Heart left ventricle (tissue), 16 donors: ENCODE measurements at regions of chr20 and their contacts with region 1.

Region 1: DNA sequence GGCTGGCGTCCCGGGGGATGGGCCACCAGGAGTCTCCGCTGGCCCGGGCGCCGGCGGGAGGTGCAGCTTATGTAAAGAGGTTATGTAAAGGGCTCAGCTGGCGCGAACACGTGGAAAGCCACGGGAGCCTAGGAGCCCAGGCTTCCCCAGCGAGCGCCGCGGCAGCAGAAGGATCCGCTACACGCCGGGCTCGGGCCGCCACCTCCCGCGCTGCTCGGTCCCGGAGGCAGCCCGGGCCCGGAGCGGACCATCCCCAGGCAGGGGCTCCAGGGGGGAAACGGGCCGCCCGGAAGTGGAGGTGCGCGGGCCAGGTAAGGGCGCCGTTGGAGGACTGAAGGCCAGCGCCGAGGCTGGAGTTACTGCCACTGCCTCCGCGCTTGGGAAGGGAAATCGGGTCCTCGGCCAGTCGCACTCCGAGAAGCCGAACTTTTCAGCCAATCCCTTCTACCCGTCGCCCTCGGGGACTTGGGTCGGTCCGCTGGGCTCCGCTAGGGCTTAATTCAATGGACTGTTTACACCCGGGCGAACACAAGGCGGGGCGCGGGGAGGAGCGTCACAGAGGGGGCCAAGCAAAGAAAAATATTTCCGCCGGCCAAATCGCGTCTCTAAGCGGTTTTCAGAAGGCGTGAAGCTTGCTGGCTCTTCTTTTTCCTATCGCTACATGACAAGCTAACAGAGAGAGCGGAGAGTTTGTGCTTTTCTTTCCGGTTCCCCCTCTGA is 398 bp downstream of the STK35 start:
- DNase-seq: peak; percentile 93 to 96 (median 94)
- ATAC-seq: peak; percentile 91 to 93 (median 92)
- H3K4me3 ChIP-seq: peak overlapping the region; percentile 60 to 98 (median 87)
- H3K27ac ChIP-seq: peak overlapping the region; percentile 95 to 100 (median 99)
- H3K4me1 ChIP-seq: peaks cover 3 to 47% (median 40%) of the 10 kb centered on the region in 12 donors
- H3K27me3 ChIP-seq: no peaks in the 10 kb centered on the region
- CTCF ChIP-seq: peak in 3 of 12 donors; percentile 7 to 24 (median 12)
- POLR2A ChIP-seq: peak in 1 of 2 donors; percentile 43

Region 2: GRCh38 chr20:1301031-1301529 is 800.9 kb before region 1 on chr20:
- intact Hi-C with region 1: no loop called
- DNase-seq: peak in 1 of 5 donors; percentile 30
- ATAC-seq: peak in 1 of 4 donors; percentile 28
- H3K4me3 ChIP-seq: no peak overlapping the region
- H3K27ac ChIP-seq: peak overlapping the region in 1 of 12 donors; percentile 49
- H3K4me1 ChIP-seq: peaks cover 0 to 9% (median 0%) of the 10 kb centered on the region in 12 donors
- H3K27me3 ChIP-seq: no peaks in the 10 kb centered on the region
- CTCF ChIP-seq: no peak
- POLR2A ChIP-seq: no peak

Region 3: DNA sequence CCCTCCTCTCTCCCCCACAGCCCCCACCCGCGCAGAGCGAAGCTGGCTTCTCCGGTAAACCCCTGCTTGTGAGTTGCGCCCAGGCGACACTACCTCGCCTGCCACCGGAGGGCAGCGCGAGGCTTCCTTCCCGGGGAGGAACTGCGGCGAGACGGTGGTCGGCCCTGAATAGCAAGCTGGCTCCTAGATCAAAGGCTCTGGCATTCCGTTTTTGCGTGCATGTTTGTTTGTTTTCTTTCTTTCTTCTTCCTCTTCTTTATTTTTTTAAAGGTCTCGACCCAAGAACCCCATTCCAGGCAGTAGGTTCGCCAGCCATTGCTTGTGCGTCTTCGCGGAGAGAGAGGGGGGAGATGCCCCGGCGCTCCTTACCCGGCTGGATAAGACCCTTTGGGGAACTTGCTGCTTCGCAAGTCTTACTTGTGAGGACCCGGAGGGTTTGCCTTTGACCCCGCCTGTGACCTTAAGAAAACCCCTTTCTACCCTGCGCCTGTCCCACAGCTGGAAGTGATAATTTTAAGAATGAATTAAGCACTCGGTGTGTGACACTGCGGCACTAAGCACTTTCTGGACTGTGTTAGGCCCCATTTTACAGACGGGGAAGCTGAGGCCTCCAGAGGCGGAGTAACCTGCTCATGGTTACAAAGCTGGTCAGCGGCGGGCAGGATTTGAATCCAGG is 299.5 kb before region 1 on chr20:
- intact Hi-C with region 1: loop called in 1 of 10 experiments (anchors 1 kb)
- DNase-seq: peak; percentile 66 to 87 (median 74)
- ATAC-seq: peak; percentile 82 to 92 (median 86)
- H3K4me3 ChIP-seq: peak overlapping the region; percentile 47 to 82 (median 66)
- H3K27ac ChIP-seq: peak overlapping the region in 10 of 12 donors; percentile 66 to 90 (median 80)
- H3K4me1 ChIP-seq: peaks cover 0 to 39% (median 19%) of the 10 kb centered on the region in 12 donors
- H3K27me3 ChIP-seq: no peaks in the 10 kb centered on the region
- CTCF ChIP-seq: peak; percentile 43 to 79 (median 68)
- POLR2A ChIP-seq: no peak

Region 4: GRCh38 chr20:1894951-1895673 is 206.9 kb before region 1 on chr20 and contains the start of gene SIRPA:
- intact Hi-C with region 1: loop called in 2 of 10 experiments (anchors 10 kb)
- DNase-seq: peak; percentile 68 to 81 (median 74)
- ATAC-seq: peak; percentile 35 to 74 (median 64)
- H3K4me3 ChIP-seq: peak within 1 kb of the TSS; percentile 53 to 96 (median 71)
- H3K27ac ChIP-seq: peak within 1 kb of the TSS; percentile 84 to 98 (median 92)
- H3K4me1 ChIP-seq: peaks cover 0 to 57% (median 32%) of the 10 kb centered on the region in 12 donors
- H3K27me3 ChIP-seq: no peaks in the 10 kb centered on the region
- CTCF ChIP-seq: no peak
- POLR2A ChIP-seq: peak in 1 of 2 donors; percentile 34
- total RNA-seq, gene SIRPA: 13.6 to 73.5 (median 28.5) TPM

Region 5: GRCh38 chr20:1965520-1966351 is 136.3 kb before region 1 on chr20:
- intact Hi-C with region 1: loop called in 1 of 10 experiments (anchors 5 kb)
- DNase-seq: peak; percentile 54 to 84 (median 70)
- ATAC-seq: peak; percentile 20 to 88 (median 74)
- H3K4me3 ChIP-seq: peak overlapping the region in 4 of 12 donors; percentile 9 to 33 (median 18)
- H3K27ac ChIP-seq: peak overlapping the region in 1 of 12 donors; percentile 70
- H3K4me1 ChIP-seq: peaks cover 0 to 26% (median 0%) of the 10 kb centered on the region in 12 donors
- H3K27me3 ChIP-seq: peaks cover 0 to 4% (median 0%) of the 10 kb centered on the region in 9 donors
- CTCF ChIP-seq: peak; percentile 79 to 96 (median 91)
- POLR2A ChIP-seq: no peak

Region 6: DNA sequence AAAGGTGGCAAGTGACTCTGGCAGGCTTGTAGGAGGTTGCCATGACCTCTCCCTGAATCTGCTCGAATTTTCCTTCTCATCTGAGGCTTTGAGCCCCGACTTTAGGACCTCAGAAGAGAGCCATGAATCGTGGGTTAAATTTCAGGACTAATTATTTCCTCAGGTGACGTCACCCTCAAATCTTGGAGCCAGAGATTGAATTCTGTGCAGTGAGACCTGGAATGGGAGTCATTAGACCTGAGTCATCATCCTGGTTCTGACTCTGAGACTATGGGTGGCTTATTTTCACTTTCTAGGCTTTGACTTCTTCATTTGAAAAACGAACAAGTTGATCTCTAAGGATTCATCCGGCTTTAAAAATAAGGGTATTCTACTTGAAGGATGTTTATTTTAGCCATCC is 59.6 kb before region 1 on chr20:
- intact Hi-C with region 1: no loop called
- DNase-seq: no peak
- ATAC-seq: no peak
- H3K4me3 ChIP-seq: no peak overlapping the region
- H3K27ac ChIP-seq: no peak overlapping the region
- H3K4me1 ChIP-seq: no peaks in the 10 kb centered on the region
- H3K27me3 ChIP-seq: peaks cover 0 to 17% (median 2%) of the 10 kb centered on the region in 9 donors
- CTCF ChIP-seq: no peak
- POLR2A ChIP-seq: no peak

Region 7: GRCh38 chr20:2149507-2149906 is 47.5 kb after region 1 on chr20:
- intact Hi-C with region 1: loop called in 5 of 10 experiments (anchors 2 to 5 kb)
- DNase-seq: peak in 1 of 5 donors; percentile 10
- ATAC-seq: no peak
- H3K4me3 ChIP-seq: no peak overlapping the region
- H3K27ac ChIP-seq: no peak overlapping the region
- H3K4me1 ChIP-seq: peaks cover 0 to 41% (median 17%) of the 10 kb centered on the region in 12 donors
- H3K27me3 ChIP-seq: no peaks in the 10 kb centered on the region
- CTCF ChIP-seq: no peak
- POLR2A ChIP-seq: no peak

Region 8: DNA sequence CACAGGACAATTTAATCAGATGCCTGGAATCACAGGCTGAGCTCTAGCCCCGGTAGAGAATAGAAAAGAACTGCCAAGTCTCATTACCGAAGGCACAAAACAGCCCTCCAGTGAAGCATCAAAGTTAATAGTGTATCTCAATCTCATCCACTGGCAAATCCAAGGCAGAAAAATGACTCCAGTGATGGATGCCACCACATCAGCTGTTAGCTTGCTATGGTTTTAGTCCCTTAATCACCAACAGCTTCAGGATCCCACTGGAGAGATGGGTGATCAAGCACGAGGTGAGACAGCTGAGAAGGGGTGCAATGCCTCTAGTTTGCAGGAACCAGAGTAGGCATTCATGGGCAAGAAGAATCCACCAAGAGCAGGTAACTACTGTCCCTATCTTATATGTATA is 81.4 kb after region 1 on chr20:
- intact Hi-C with region 1: no loop called
- DNase-seq: no peak
- ATAC-seq: no peak
- H3K4me3 ChIP-seq: no peak overlapping the region
- H3K27ac ChIP-seq: no peak overlapping the region
- H3K4me1 ChIP-seq: no peaks in the 10 kb centered on the region
- H3K27me3 ChIP-seq: peaks cover 0 to 5% (median 0%) of the 10 kb centered on the region in 9 donors
- CTCF ChIP-seq: no peak
- POLR2A ChIP-seq: no peak